Panc1 (cell line): ENCODE measurements at regions of chr22 and their contacts with region 1.

Region 1: GRCh38 chr22:19307872-19308271 is 16.4 kb upstream of the CLTCL1 start:
- DNase-seq: no peak
- ATAC-seq: no peak
- H3K4me3 ChIP-seq: no peak overlapping the region
- H3K27ac ChIP-seq: no peak overlapping the region
- H3K4me1 ChIP-seq: no peaks in the 10 kb centered on the region
- H3K27me3 ChIP-seq: no peaks in the 10 kb centered on the region
- CTCF ChIP-seq: no peak

Region 2: DNA sequence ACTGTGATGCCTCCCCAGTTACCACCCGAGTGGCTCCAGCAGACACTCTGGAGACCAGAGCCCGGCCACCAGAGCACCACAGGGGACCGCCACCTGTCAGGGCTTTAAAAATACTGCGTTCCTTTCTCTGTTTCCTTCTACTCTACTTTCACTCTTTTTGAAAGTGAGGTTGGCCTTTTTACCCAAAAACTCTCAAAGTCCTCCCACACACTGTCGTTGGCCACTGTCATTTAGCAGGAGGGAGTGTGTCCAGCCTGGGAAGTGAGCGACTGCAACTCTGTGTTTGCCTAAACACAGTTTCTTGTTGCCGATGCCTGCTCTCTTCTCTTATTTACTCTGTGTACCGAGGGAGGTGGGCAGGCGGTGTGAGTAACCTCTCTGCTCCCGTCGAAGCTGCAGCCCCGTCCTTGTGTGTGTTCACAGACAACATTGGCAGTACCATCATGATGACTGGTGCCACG is 307.2 kb after region 1 on chr22:
- CTCF ChIA-PET with region 1: interaction called, 11 read pairs
- POLR2A ChIA-PET with region 1: no interaction called
- in situ Hi-C with region 1: no loop called
- intact Hi-C with region 1: no loop called
- DNase-seq: no peak
- ATAC-seq: no peak
- H3K4me3 ChIP-seq: no peak overlapping the region
- H3K27ac ChIP-seq: no peak overlapping the region
- H3K4me1 ChIP-seq: no peaks in the 10 kb centered on the region
- H3K27me3 ChIP-seq: no peaks in the 10 kb centered on the region
- CTCF ChIP-seq: no peak